ENCODE measurements at regions of chr11 and their contacts with region 1.

Region 1: DNA sequence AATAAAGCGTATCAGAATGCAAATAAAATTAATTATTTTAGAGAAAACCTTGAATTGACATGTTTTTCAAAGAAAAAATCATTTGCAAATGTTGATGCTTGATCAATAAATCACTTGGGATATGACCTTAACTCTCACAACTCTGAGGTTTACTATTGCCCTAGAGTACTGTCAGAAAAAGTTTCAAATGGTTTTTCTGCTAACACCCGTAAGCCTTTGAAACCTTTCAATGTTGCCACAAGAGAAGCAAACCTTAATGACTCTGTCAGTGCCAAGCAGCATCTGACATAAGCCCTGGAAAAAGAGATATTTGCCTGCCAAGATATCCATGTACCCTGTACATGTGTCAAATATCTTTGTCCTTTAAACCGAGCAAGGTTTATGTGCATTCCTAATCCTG is 384.3 kb upstream of the ARHGAP42 start:
- DNase-seq: no peak
- ATAC-seq: no peak
- H3K4me3 ChIP-seq: no peak overlapping the region
- H3K27ac ChIP-seq: no peak overlapping the region
- H3K4me1 ChIP-seq: no peaks in the 10 kb centered on the region
- H3K27me3 ChIP-seq: no peaks in the 10 kb centered on the region
- CTCF ChIP-seq: no peak

Region 2: GRCh38 chr11:100240025-100240539 is 62.7 kb before region 1 on chr11:
- intact Hi-C with region 1: no loop called
- DNase-seq: no peak
- ATAC-seq: no peak
- H3K4me3 ChIP-seq: no peak overlapping the region
- H3K27ac ChIP-seq: no peak overlapping the region
- H3K4me1 ChIP-seq: no peaks in the 10 kb centered on the region
- H3K27me3 ChIP-seq: no peaks in the 10 kb centered on the region
- CTCF ChIP-seq: no peak

Region 3: DNA sequence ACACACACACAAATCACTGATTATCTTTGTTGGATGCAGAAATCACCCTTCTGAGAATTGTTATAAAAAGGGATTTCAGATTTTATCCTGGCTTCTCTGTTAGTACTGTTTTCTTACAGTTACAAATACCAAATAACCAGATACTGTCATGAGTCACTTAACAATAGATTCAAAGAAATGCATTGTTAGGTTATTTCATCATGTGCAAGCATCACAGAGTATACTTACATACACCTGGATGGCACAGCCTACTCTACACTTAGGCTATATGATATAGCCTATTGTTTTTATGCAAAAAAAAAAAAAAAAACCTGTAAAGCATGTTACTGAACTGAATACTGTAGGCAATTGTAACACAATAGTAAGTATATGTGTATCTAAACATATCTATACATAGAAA is 65.1 kb after region 1 on chr11:
- intact Hi-C with region 1: loop called (anchors 10 kb)
- DNase-seq: no peak
- ATAC-seq: no peak
- H3K4me3 ChIP-seq: no peak overlapping the region
- H3K27ac ChIP-seq: no peak overlapping the region
- H3K4me1 ChIP-seq: no peaks in the 10 kb centered on the region
- H3K27me3 ChIP-seq: no peaks in the 10 kb centered on the region
- CTCF ChIP-seq: no peak